ENCODE measurements at regions of chr17 and their contacts with region 1.

Region 1: DNA sequence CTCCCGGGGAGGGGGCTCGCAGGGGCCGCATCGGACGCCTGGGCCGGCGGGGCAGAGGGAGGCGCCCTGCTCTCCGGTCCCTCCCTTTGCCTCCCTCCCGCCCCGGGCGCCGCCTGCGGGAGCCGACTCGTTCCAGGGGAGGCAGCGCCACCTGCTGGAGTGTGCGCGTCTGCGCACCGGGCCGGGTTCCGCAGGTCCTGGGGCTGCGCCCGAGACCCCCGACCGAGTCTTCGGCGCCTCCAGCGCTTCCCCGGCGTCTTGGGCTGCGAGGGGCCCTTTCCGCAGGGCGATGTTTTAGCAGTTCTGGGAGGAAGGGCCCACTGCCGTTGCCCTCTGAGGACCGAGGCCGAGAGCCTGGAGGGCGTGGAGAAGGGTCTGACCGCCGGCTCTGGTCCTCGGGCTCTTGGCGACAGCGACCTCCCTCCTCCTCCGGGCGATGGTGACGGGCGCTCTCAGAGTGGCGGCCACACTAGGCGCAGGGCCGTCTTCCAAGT is 106.3 kb downstream of the SEC14L1 start:
- DNase-seq: no peak
- H3K4me3 ChIP-seq: peak overlapping the region; percentile 52 to 55
- H3K27ac ChIP-seq: peak overlapping the region; percentile 54
- H3K4me1 ChIP-seq: peaks cover 12% of the 10 kb centered on the region
- H3K27me3 ChIP-seq: no peaks in the 10 kb centered on the region
- CTCF ChIP-seq: peak; percentile 98 to 99 (median 99)
- POLR2A ChIP-seq: no peak

Region 2: GRCh38 chr17:77086433-77087010 is 160.6 kb before region 1 on chr17:
- intact Hi-C with region 1: loop called (anchors 2 kb)
- DNase-seq: no peak
- H3K4me3 ChIP-seq: no peak overlapping the region
- H3K27ac ChIP-seq: no peak overlapping the region
- H3K4me1 ChIP-seq: peaks cover 35% of the 10 kb centered on the region
- H3K27me3 ChIP-seq: no peaks in the 10 kb centered on the region
- CTCF ChIP-seq: peak; percentile 86 to 90 (median 88)
- POLR2A ChIP-seq: no peak